Ascending aorta (tissue), 2 donors: ENCODE measurements at regions of chr3 and their contacts with region 1.

Region 1: GRCh38 chr3:188154014-188154808 is at the start of gene LPP:
- DNase-seq: peak in 1 of 2 donors; percentile 91
- H3K4me3 ChIP-seq: peak within 1 kb of the TSS; percentile 81 to 89
- H3K27ac ChIP-seq: peak within 1 kb of the TSS; percentile 98 to 99
- H3K4me1 ChIP-seq: peaks cover 0 to 31% of the 10 kb centered on the region in 2 donors
- H3K27me3 ChIP-seq: no peaks in the 10 kb centered on the region
- CTCF ChIP-seq: no peak
- total RNA-seq, gene LPP: 1,791 TPM

Region 2: GRCh38 chr3:187745201-187746058 is 408.8 kb before region 1 on chr3 and contains the start of gene BCL6:
- intact Hi-C with region 1: loop called (anchors 1 kb)
- DNase-seq: peak; percentile 66 to 97
- H3K4me3 ChIP-seq: peak within 1 kb of the TSS; percentile 73 to 75
- H3K27ac ChIP-seq: peak within 1 kb of the TSS; percentile 98 to 99
- H3K4me1 ChIP-seq: peaks cover 9 to 12% of the 10 kb centered on the region in 2 donors
- H3K27me3 ChIP-seq: no peaks in the 10 kb centered on the region
- CTCF ChIP-seq: peak in 1 of 3 experiments; percentile 12
- total RNA-seq, gene BCL6: 97.9 TPM

Region 3: GRCh38 chr3:188170461-188171459 is 16.5 kb after region 1 on chr3:
- intact Hi-C with region 1: loop called (anchors 2 kb)
- DNase-seq: peak in 1 of 2 donors; percentile 22
- H3K4me3 ChIP-seq: no peak overlapping the region
- H3K27ac ChIP-seq: peak overlapping the region; percentile 66 to 76
- H3K4me1 ChIP-seq: peaks cover 4 to 75% of the 10 kb centered on the region in 2 donors
- H3K27me3 ChIP-seq: no peaks in the 10 kb centered on the region
- CTCF ChIP-seq: no peak

Region 4: GRCh38 chr3:188220988-188221818 is 67.0 kb after region 1 on chr3:
- intact Hi-C with region 1: loop called (anchors 2 kb)
- DNase-seq: peak in 1 of 2 donors; percentile 89
- H3K4me3 ChIP-seq: peak overlapping the region; percentile 27 to 63
- H3K27ac ChIP-seq: peak overlapping the region; percentile 92 to 96
- H3K4me1 ChIP-seq: peaks cover 6 to 54% of the 10 kb centered on the region in 2 donors
- H3K27me3 ChIP-seq: no peaks in the 10 kb centered on the region
- CTCF ChIP-seq: no peak

Region 5: DNA sequence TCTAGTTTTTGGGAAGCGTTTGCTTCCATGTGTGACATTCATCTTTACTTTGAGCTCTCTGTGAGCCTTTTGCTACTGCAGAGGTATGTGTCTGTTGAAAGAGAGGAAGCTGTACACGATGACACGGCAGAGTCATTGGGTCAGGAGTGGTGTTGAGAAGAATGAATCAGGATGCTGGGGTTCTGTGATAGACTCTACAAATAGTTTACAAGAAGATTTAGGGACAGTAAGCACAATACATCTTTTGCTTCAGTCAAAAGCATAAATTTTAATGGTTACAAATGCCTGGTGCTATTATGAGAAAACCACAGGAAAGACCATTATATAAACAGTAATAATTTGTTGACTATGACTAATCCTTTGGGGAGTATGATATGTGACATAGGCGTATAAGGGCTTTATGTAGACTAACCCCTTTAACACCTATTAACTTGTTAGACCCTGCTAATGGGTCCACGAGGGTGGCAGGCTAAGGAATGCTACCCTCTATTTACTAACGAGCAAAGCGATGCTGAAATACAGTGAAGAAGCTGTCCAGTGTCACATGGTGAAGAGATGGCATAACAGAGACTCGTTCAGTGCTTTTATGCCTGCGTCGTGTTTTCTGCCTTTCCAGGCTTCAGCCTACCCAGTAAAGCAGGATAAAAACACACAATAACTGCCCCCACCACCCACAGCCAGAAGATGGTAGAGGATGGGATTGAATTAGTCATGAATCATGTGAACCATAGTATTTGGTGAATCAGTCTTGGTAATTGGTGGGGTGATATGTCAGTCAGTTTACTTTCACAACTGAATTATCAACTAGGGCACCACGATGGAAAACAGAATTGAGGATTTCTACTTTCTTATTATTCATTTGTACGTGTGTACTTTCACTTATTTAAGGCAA is 118.5 kb after region 1 on chr3:
- intact Hi-C with region 1: no loop called
- DNase-seq: no peak
- H3K4me3 ChIP-seq: no peak overlapping the region
- H3K27ac ChIP-seq: peak overlapping the region; percentile 94 to 99
- H3K4me1 ChIP-seq: peaks cover 24 to 73% of the 10 kb centered on the region in 2 donors
- H3K27me3 ChIP-seq: no peaks in the 10 kb centered on the region
- CTCF ChIP-seq: no peak

Region 6: DNA sequence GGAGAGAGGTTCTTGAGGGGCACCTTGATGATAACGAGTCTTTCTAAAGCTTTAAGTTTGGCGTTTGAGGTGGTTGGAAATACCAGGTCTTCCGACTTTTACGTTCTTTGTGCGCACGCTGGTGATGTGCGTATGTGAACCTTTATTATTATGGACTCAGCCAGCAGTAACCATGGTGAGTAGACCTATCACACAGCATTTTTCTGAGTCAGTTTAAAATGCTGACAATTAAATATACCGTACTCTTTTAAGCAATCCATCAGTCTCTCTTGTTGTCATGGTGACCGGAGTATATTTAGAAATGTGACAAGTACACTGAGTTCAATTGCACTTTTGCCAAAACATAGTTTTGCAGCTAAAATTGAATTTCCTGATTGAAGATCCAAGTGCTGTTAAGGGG is 171.9 kb after region 1 on chr3:
- intact Hi-C with region 1: loop called (anchors 5 kb)
- DNase-seq: peak in 1 of 2 donors; percentile 72
- H3K4me3 ChIP-seq: peak overlapping the region in 1 of 2 donors; percentile 29
- H3K27ac ChIP-seq: peak overlapping the region; percentile 62 to 73
- H3K4me1 ChIP-seq: peaks cover 11 to 53% of the 10 kb centered on the region in 2 donors
- H3K27me3 ChIP-seq: no peaks in the 10 kb centered on the region
- CTCF ChIP-seq: no peak